Activated CD4-positive, alpha-beta T cell treated with anti-CD3 and anti-CD28 coated beads, Interleukin-2, amount 10 ng/mL, durations not matched to agents 7 days and 5 days (primary cell): ENCODE measurements at regions of chr11 and their contacts with region 1.

Region 1: DNA sequence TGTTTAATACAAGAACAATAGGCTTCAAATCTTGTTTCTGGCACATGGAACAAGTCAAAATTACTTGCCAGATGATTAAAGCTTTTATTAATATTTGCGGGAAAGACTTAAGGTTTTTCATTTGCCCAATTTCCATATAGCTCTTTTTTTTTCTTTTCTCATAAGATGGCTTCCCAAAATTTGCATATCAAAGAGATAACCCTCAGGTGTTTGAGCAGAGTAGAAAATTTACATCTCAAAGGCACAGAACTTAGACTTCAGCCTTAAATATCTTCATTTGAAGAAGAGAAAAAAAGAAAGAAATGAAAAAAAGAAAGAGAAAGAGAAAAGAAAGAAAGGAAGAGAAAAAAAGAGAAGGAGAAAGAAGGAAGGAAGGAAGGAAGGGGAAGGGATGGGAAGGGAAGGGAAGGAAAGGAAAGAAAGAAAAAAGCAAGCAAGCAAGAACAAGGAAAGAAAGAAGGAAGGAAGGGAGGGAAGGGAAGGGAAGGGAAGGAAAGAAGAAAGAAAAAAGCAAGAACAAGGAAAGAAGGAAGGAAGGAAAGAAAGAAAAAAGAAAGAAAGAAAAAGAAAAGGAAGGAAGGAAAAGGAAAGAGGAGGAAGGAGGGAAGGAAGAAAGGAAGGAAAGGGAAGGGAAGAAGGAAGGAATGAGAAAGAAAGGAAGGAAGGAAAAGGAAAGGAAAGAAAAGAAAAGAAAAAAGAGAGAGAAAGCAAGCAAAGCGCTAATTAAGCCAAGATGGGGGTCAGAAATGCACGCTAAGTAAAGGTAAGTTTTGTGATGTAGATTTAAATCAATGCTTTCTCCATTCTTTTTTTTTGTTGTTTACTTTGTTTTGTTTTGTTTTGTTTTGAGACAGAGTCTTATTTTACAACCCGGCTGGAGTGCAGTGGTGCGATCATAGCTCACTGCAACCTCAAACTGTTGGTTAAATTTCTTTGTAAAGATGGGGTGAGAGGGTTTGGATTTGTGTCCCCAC is 20.2 kb upstream of the IFITM3 start:
- DNase-seq: no peak
- H3K4me3 Mint-ChIP-seq: no peak overlapping the region
- H3K27ac Mint-ChIP-seq: no peak overlapping the region
- H3K4me1 Mint-ChIP-seq: peaks cover 30% of the 10 kb centered on the region
- H3K27me3 Mint-ChIP-seq: peaks cover 16% of the 10 kb centered on the region

Region 2: GRCh38 chr11:330694-331357 is 10.0 kb before region 1 on chr11:
- CTCF ChIA-PET with region 1: interaction called, 12 read pairs
- POLR2A ChIA-PET with region 1: no interaction called
- DNase-seq: peak; percentile 42
- H3K4me3 Mint-ChIP-seq: no peak overlapping the region
- H3K27ac Mint-ChIP-seq: peak overlapping the region; percentile 88
- H3K4me1 Mint-ChIP-seq: peaks cover 80% of the 10 kb centered on the region
- H3K27me3 Mint-ChIP-seq: no peaks in the 10 kb centered on the region

Region 3: GRCh38 chr11:355581-356458 is 15.0 kb after region 1 on chr11:
- CTCF ChIA-PET with region 1: interaction called, 12 read pairs
- POLR2A ChIA-PET with region 1: no interaction called
- DNase-seq: peak; percentile 93
- H3K4me3 Mint-ChIP-seq: peak overlapping the region; percentile 85
- H3K27ac Mint-ChIP-seq: peak overlapping the region; percentile 93
- H3K4me1 Mint-ChIP-seq: peaks cover 44% of the 10 kb centered on the region
- H3K27me3 Mint-ChIP-seq: peaks cover 3% of the 10 kb centered on the region